ENCODE measurements at regions of chrX and their contacts with region 1.

Region 1: DNA sequence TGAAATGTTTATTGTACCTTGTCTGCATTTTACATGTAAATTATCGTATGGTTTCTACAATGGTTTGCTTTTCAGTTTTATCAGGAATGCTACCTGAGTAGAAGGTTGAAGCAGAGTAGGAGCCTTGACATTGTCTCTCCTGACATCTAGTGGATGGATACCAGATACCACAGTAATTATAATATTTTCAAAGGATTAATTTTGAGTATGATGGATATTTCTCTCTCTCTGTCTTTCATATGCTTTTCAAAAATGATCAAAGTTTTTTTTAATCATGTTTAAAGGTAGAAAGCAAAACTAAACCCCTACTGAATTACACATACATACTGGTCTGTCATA is 109.4 kb upstream of the KLHL13 start:
- DNase-seq: no peak
- ATAC-seq: peak in 1 of 8 donors; percentile 56
- H3K4me3 ChIP-seq: no peak overlapping the region
- H3K27ac ChIP-seq: no peak overlapping the region
- H3K4me1 ChIP-seq: peaks cover 0 to 4% (median 0%) of the 10 kb centered on the region in 9 donors
- H3K27me3 ChIP-seq: peaks cover 0 to 23% (median 0%) of the 10 kb centered on the region in 7 donors
- CTCF ChIP-seq: peak in 7 of 9 donors; percentile 26 to 56 (median 51)

Region 2: DNA sequence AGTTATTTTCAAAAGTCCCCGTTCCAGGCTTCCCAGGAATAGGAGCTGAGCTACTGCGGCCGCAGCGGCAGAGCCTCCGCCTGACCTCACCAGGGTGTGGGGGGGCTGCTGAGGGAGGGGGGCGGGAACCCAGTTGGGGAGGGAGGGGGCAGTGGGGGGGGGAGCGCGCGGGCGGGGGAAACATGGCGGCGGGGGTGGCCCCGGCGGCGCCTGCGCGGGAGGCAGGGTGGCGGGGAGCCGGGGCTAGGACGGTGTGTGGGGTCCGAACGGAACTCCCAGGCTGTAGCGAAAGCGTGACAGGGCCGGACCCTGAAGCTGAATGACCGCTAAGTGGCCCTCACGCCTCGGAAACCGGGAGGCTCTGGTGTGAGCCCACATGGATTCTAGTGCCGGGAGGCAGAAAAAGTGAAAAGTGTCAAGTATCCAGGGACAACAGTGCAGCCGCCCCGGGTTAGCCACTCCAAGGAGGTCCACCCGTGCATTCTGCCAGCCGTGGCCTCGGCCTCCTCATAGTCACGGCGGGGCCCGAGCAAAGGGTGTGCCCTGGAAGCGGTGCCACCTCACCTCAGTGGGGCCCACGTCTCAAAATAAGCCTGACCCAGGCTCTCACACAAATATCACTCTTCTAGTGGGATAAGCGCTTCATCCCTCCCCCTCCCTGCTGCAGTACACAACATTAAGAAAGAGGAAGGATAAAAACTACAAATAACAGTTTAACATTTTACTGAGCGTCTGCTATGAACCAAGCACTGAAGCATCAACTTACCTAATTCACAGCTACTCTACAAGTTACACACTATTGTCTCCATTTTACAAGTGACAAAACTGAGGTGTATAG is 109.1 kb before region 1 on chrX and contains the start of gene KLHL13:
- intact Hi-C with region 1: loop called in 3 of 10 experiments (anchors 10 kb)
- DNase-seq: peak; percentile 31 to 47
- ATAC-seq: peak; percentile 72 to 93 (median 84)
- H3K4me3 ChIP-seq: peak within 1 kb of the TSS; percentile 32 to 66 (median 60)
- H3K27ac ChIP-seq: peak within 1 kb of the TSS; percentile 21 to 84 (median 73)
- H3K4me1 ChIP-seq: peaks cover 0 to 7% (median 0%) of the 10 kb centered on the region in 9 donors
- H3K27me3 ChIP-seq: peaks cover 0 to 26% (median 0%) of the 10 kb centered on the region in 7 donors
- CTCF ChIP-seq: no peak
- total RNA-seq, gene KLHL13: 2.9 to 18.9 (median 12.0) TPM